HCT116 (cell line): ENCODE measurements at regions of chr11 and their contacts with region 1.

Region 1: GRCh38 chr11:5791165-5791564 is at the start of gene OR52N1:
- DNase-seq: no peak
- ATAC-seq: no peak
- H3K4me3 ChIP-seq: no peak within 1 kb of the TSS
- H3K27ac ChIP-seq: no peak within 1 kb of the TSS
- H3K4me1 ChIP-seq: no peaks in the 10 kb centered on the region
- H3K27me3 ChIP-seq: peaks cover 29% of the 10 kb centered on the region
- CTCF ChIP-seq: no peak
- POLR2A ChIP-seq: no peak
- RAD21 ChIP-seq: no peak
- total RNA-seq, gene OR52N1: not detected

Region 2: DNA sequence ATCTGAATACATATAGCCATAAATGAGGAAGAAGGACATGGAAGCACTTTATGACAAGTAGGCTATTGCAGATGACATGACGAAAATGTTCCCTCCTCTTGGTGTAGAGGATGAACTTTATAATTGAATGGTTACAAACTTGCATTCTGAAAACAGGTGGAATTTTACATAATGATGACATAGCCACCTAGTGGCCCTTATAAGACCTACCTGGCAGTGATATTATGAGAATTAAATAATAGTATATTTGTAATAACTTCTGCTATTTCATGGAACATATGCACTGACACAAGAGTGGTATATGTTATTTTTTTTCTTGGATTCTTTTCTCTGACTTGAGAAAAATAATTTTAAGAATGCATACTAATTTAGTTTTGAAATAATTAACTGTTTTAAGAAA is 78.7 kb before region 1 on chr11:
- CTCF ChIA-PET with region 1: no interaction called
- POLR2A ChIA-PET with region 1: no interaction called
- RAD21 ChIA-PET with region 1: no interaction called
- intact Hi-C with region 1: no loop called
- DNase-seq: peak; percentile 7
- ATAC-seq: peak; percentile 57
- H3K4me3 ChIP-seq: no peak overlapping the region
- H3K27ac ChIP-seq: no peak overlapping the region
- H3K4me1 ChIP-seq: no peaks in the 10 kb centered on the region
- H3K27me3 ChIP-seq: peaks cover 36% of the 10 kb centered on the region
- CTCF ChIP-seq: peak; percentile 41 to 60 (median 56); a peak in 5 of 6 replicates
- POLR2A ChIP-seq: no peak
- RAD21 ChIP-seq: peak; percentile 71

Region 3: GRCh38 chr11:5753943-5754342 is 37.2 kb before region 1 on chr11 and contains the start of gene OR52N4:
- CTCF ChIA-PET with region 1: no interaction called
- POLR2A ChIA-PET with region 1: no interaction called
- RAD21 ChIA-PET with region 1: no interaction called
- intact Hi-C with region 1: loop called (anchors 2 kb)
- DNase-seq: no peak
- ATAC-seq: no peak
- H3K4me3 ChIP-seq: no peak within 1 kb of the TSS
- H3K27ac ChIP-seq: no peak within 1 kb of the TSS
- H3K4me1 ChIP-seq: no peaks in the 10 kb centered on the region
- H3K27me3 ChIP-seq: peaks cover 80% of the 10 kb centered on the region
- CTCF ChIP-seq: no peak
- POLR2A ChIP-seq: no peak
- RAD21 ChIP-seq: no peak
- total RNA-seq, gene OR52N4: not detected

Region 4: DNA sequence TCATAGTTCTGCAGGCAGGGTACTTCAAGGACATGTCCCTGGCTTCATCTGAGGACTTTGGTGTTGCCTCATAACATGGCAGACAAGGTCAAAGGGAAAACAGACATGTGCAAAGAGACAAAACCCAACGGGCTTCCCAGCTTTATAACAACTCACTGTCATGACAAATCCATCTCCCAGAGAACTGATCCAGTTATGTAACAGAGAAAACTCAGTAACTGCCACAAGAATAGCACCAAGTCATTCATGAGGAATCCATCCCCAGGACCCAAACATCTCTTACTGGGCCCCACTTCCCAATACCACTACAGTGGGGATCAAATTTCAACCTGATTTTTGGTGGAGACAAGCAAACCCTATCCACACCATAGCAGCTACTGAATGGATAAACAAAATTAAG is 24.1 kb before region 1 on chr11:
- CTCF ChIA-PET with region 1: no interaction called
- POLR2A ChIA-PET with region 1: no interaction called
- RAD21 ChIA-PET with region 1: no interaction called
- intact Hi-C with region 1: loop called (anchors 1 kb)
- DNase-seq: no peak
- ATAC-seq: no peak
- H3K4me3 ChIP-seq: no peak overlapping the region
- H3K27ac ChIP-seq: no peak overlapping the region
- H3K4me1 ChIP-seq: no peaks in the 10 kb centered on the region
- H3K27me3 ChIP-seq: peaks cover 8% of the 10 kb centered on the region; the same call in 1 of the 2 replicates
- CTCF ChIP-seq: no peak
- POLR2A ChIP-seq: no peak
- RAD21 ChIP-seq: no peak